Panc1 (cell line): ENCODE measurements at regions of chr10 and their contacts with region 1.

Region 1: GRCh38 chr10:100571084-100571856 is 35.5 kb downstream of the HIF1AN start:
- DNase-seq: no peak
- ATAC-seq: no peak
- H3K4me3 ChIP-seq: no peak overlapping the region
- H3K27ac ChIP-seq: no peak overlapping the region
- H3K4me1 ChIP-seq: no peaks in the 10 kb centered on the region
- H3K27me3 ChIP-seq: no peaks in the 10 kb centered on the region; the same call in 1 of the 2 replicates
- CTCF ChIP-seq: no peak

Region 2: DNA sequence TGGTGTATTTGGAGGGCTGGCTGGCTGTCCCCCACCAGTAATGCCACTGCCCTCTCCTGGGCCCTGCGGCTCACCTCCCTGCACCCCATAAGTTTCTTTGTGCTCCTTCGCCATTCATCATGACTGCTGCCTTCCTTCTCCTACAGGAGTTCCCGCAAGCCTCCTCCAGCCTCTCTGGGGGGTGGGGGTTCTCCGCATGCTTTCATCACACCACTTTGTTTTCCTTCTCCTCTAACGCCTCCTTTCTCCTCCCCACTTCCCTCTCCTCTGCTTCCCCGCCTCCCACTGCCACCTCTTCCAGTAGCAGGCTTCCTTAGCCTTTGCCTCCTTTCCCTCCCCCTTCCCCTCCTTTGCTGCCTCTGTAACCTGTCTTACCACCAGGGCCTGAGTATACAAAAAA is 232.2 kb after region 1 on chr10:
- CTCF ChIA-PET with region 1: no interaction called
- POLR2A ChIA-PET with region 1: interaction called, 12 read pairs
- in situ Hi-C with region 1: no loop called
- intact Hi-C with region 1: no loop called
- DNase-seq: no peak
- ATAC-seq: no peak
- H3K4me3 ChIP-seq: no peak overlapping the region
- H3K27ac ChIP-seq: no peak overlapping the region
- H3K4me1 ChIP-seq: no peaks in the 10 kb centered on the region
- H3K27me3 ChIP-seq: no peaks in the 10 kb centered on the region
- CTCF ChIP-seq: no peak

Region 3: DNA sequence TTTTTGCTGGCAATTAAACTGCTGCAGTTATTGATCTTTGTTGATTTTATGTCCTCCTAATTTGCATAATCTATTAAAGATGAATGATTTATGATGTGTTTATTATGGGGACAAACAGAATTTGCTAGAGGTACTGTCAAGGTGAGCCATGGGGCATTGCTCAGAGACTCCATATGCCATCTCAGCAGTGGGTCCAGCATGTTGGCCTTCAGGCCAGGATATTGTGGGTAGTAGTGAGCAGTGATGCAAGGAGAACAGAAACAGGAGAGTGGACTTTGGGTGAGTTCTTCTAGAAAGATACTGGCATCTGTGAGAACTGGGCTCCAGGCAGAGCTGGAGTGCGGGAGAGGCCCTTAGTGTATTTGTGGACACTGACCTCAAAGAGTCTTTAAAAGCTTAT is 240.0 kb after region 1 on chr10:
- CTCF ChIA-PET with region 1: no interaction called
- POLR2A ChIA-PET with region 1: interaction called, 10 read pairs
- in situ Hi-C with region 1: no loop called
- intact Hi-C with region 1: no loop called
- DNase-seq: no peak
- ATAC-seq: no peak
- H3K4me3 ChIP-seq: no peak overlapping the region
- H3K27ac ChIP-seq: no peak overlapping the region
- H3K4me1 ChIP-seq: no peaks in the 10 kb centered on the region
- H3K27me3 ChIP-seq: no peaks in the 10 kb centered on the region
- CTCF ChIP-seq: no peak